Transverse colon (tissue), 4 donors: ENCODE measurements at regions of chr5 and their contacts with region 1.

Region 1: DNA sequence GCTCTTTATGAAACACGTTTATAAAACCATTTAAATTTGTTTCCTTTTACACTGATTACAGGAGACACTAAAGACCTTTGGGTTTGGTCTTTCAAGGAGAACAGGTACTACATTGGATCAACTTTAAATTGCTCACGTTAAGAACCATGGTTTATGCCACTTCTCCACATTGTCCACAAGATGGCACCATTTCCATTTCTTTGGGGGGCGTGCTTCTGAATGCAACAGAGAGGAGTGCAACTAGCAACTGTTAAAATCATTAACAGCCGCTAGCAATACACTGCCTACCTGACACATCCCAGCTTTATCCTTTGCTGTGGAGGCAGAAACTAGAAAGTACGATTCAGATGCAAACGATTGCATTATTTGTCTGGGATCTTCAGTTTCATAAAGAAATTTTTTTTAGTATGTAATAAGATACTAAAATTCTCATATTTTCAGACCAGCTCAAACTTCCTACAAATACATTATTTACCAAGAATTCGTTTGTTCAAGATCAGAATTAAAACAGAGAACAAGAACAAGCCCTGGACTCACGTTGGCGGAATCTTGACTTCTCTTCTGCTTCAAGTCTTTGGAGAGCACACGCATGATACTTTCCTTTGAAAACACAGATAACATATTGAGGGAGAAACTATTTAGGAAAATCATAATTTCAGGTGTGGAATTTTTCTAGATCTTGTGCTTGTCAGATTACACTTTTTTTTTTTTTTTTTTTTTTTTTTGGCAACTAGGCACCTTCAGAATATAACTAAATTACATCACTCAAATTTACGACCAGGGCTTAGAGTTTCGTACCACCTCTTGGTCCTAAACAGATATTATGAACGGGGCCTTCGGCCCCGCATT is 702 bp downstream of the CDC20B start:
- DNase-seq: peak; percentile 50
- H3K4me3 ChIP-seq: peak overlapping the region in 3 of 4 donors; percentile 35 to 56 (median 42)
- H3K27ac ChIP-seq: peak overlapping the region in 1 of 4 donors; percentile 43
- H3K4me1 ChIP-seq: peaks cover 9 to 32% (median 28%) of the 10 kb centered on the region in 4 donors
- H3K27me3 ChIP-seq: peaks cover 71% of the 10 kb centered on the region
- CTCF ChIP-seq: peak; percentile 77 to 87 (median 82)
- EP300 ChIP-seq: no peak
- POLR2A ChIP-seq: no peak

Region 2: GRCh38 chr5:54517174-54518092 is 654.8 kb before region 1 on chr5 and contains the start of gene SNX18:
- in situ Hi-C with region 1: loop called in 3 of 4 experiments (anchors 25 kb)
- intact Hi-C with region 1: no loop called
- DNase-seq: peak; percentile 93
- H3K4me3 ChIP-seq: peak within 1 kb of the TSS; percentile 82 to 92 (median 88)
- H3K27ac ChIP-seq: peak within 1 kb of the TSS; percentile 91 to 95 (median 95)
- H3K4me1 ChIP-seq: peaks cover 5 to 46% (median 21%) of the 10 kb centered on the region in 4 donors
- H3K27me3 ChIP-seq: no peaks in the 10 kb centered on the region
- CTCF ChIP-seq: peak; percentile 90 to 98 (median 94)
- EP300 ChIP-seq: no peak
- POLR2A ChIP-seq: peak; percentile 27
- total RNA-seq, gene SNX18: 18.0 to 35.4 (median 20.0) TPM

Region 3: DNA sequence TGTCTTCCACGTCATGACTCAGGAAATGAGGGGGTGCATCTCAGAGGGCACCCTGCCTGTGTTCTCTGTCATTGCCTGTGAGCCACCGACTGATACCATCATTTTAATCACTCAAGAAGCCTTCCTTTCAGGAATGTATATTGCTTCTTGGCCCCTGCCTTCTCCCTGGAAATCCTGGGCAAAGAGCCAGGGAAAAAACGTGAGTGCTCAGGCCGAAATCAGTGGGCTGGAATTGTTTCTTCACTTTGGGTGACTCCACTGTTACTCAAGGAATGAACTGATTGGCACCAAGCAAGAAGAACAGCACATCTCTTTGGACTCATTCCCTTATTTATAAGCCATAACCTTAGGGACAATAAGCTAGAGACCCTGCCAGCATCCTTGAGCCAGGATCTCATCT is 528.6 kb before region 1 on chr5:
- in situ Hi-C with region 1: no loop called
- intact Hi-C with region 1: no loop called
- DNase-seq: no peak
- H3K4me3 ChIP-seq: no peak overlapping the region
- H3K27ac ChIP-seq: no peak overlapping the region
- H3K4me1 ChIP-seq: peaks cover 0 to 11% (median 5%) of the 10 kb centered on the region in 4 donors
- H3K27me3 ChIP-seq: no peaks in the 10 kb centered on the region
- CTCF ChIP-seq: no peak
- EP300 ChIP-seq: no peak
- POLR2A ChIP-seq: no peak

Region 4: DNA sequence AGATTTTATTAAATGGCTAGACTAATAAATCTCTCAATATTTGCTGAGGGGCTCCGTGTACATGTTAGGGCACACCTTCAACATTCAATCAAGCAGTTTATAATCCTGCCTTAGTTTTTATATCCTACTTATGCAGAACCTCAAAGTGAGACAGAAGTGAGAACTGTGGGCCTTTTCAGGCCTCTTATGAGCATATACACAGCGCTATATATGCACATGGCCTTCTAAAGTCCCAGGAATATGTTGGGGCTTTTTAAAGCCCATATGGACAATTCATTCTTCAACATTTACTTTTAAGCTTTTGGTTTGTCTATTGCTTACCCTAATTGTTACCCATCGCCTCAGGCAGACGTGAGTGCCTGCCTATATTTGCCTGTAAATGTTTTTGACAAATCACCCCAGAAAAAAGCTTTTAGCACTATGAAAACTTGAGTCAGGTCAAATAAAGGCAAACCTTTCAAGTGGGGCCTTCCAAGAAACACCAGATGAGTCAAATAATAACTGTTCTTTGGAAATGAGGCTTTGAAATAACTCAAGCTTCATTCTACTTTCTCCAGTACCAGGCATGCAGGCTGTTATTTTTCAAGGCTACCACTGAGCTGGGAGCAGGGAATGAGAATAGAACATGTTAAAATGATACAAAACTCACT is 245.1 kb before region 1 on chr5:
- in situ Hi-C with region 1: no loop called
- intact Hi-C with region 1: no loop called
- DNase-seq: no peak
- H3K4me3 ChIP-seq: no peak overlapping the region
- H3K27ac ChIP-seq: no peak overlapping the region
- H3K4me1 ChIP-seq: no peaks in the 10 kb centered on the region
- H3K27me3 ChIP-seq: no peaks in the 10 kb centered on the region
- CTCF ChIP-seq: no peak
- EP300 ChIP-seq: no peak
- POLR2A ChIP-seq: no peak

Region 5: GRCh38 chr5:55072666-55073065 is 99.6 kb before region 1 on chr5:
- in situ Hi-C with region 1: no loop called
- intact Hi-C with region 1: no loop called
- DNase-seq: no peak
- H3K4me3 ChIP-seq: no peak overlapping the region
- H3K27ac ChIP-seq: no peak overlapping the region
- H3K4me1 ChIP-seq: no peaks in the 10 kb centered on the region
- H3K27me3 ChIP-seq: no peaks in the 10 kb centered on the region
- CTCF ChIP-seq: no peak
- EP300 ChIP-seq: no peak
- POLR2A ChIP-seq: no peak

Region 6: GRCh38 chr5:55226027-55226933 is 54.0 kb after region 1 on chr5:
- in situ Hi-C with region 1: loop called in 3 of 4 experiments (anchors 10 kb)
- intact Hi-C with region 1: loop called (anchors 10 kb)
- DNase-seq: peak; percentile 70
- H3K4me3 ChIP-seq: peak overlapping the region; percentile 12 to 50 (median 30)
- H3K27ac ChIP-seq: peak overlapping the region in 1 of 4 donors; percentile 48
- H3K4me1 ChIP-seq: peaks cover 9 to 29% (median 24%) of the 10 kb centered on the region in 4 donors
- H3K27me3 ChIP-seq: peaks cover 100% of the 10 kb centered on the region
- CTCF ChIP-seq: peak; percentile 24 to 47 (median 40)
- EP300 ChIP-seq: no peak
- POLR2A ChIP-seq: no peak

Region 7: DNA sequence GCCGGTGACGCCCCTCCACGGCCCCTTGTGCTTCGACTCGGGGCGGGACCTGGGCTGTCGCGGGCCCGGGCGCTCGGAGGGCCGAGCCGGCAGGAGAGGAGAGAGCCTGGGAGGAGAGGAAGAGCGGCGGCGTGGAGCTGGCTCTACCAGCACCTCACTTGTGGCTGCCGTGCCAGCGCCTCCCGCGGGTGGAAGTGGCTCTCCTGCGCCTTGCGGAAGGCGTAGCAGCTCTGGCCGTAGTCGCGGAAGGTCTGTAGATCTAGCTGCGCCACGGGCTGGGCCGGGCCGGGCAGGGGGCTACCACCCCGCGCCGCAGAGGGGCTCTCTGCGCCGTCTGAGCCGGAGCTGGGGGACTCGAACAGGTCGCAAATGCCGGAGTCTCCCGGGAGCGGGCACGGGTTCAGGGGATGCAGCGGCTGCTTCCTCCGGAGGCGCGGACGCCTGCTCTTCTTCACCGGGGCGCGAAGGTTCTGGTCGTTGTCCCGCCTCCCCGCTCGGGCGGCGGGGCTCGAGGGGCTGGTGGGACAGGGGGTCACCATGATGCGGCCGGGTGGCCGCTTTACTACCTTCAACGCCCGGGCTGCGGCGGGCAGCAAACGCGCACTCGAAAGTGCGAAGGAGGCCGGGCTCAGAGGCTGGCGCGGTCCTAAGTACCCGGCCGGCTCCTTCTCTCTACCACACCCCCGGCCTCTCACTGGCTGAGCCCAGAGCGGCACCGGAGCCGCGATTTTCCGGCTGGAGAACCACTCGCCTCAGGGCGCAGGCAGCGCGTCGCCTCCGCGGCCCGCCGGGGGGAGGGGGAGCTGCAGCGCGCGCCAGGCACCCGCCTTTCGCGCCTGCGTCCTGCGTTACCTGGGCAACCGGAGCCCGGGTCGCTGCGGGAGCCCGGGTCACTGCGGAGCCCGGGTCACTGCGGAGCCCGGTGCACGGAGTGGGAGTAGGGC is 61.0 kb after region 1 on chr5 and contains the start of gene CCNO:
- in situ Hi-C with region 1: loop called in 3 of 4 experiments (anchors 10 kb)
- intact Hi-C with region 1: loop called (anchors 10 kb)
- DNase-seq: peak; percentile 80
- H3K4me3 ChIP-seq: peak within 1 kb of the TSS; percentile 30 to 63 (median 36)
- H3K27ac ChIP-seq: peak within 1 kb of the TSS; percentile 19 to 75 (median 47)
- H3K4me1 ChIP-seq: peaks cover 16 to 42% (median 41%) of the 10 kb centered on the region in 4 donors
- H3K27me3 ChIP-seq: peaks cover 96% of the 10 kb centered on the region
- CTCF ChIP-seq: no peak
- EP300 ChIP-seq: no peak
- POLR2A ChIP-seq: no peak
- total RNA-seq, gene CCNO: 0.80 to 6.0 (median 2.8) TPM

Region 8: GRCh38 chr5:55691265-55692105 is 519.2 kb after region 1 on chr5:
- in situ Hi-C with region 1: no loop called
- intact Hi-C with region 1: loop called (anchors 10 kb)
- DNase-seq: no peak
- H3K4me3 ChIP-seq: no peak overlapping the region
- H3K27ac ChIP-seq: peak overlapping the region; percentile 7 to 56 (median 28)
- H3K4me1 ChIP-seq: peaks cover 9 to 34% (median 19%) of the 10 kb centered on the region in 4 donors
- H3K27me3 ChIP-seq: no peaks in the 10 kb centered on the region
- CTCF ChIP-seq: peak; percentile 67 to 85 (median 71)
- EP300 ChIP-seq: no peak
- POLR2A ChIP-seq: no peak

Region 9: DNA sequence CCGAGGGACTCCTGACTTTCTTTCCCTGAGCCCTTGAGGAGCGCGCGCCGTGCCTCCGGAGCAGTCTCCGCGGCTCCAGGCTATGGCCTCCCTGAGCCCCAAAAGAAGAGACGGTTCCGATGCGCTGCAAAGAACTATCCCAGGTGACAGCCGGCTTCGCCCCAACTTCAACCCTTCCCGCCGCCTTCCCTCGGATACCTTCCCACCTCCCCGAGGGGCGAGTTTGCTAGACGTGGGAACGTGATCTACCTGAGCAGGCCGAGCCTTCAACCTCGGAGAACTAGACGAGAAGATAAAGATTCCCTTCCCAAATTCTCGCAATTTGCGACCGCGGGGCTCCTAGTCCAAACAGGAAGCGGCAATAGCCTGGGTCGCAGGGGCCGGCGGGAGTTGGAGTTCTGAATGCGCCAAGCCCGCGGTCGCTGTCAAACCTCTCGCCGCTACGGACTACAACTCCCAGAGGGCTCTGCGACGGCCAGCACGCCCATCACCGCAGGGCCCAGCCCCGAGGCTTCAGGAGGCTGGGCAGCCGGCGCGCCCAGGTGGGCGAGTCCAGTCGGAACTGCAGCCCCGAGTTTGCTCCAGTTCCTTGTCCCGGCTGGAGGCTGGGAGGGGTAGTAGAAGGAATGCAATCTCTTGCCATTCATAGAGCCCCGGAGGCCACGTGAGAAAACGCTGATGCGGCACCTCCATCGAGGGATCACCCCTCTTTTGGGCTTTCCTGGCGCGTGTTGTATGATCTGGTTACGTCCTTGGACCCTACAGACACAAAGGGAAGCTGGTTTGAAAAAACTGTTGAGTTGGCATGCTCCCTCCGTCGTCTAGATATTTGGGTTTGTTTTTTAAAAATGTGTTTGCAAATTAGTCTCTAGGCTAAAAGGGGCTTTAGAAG is 539.9 kb after region 1 on chr5 and contains the start of gene SLC38A9:
- in situ Hi-C with region 1: loop called in 1 of 4 experiments (anchors 25 kb)
- intact Hi-C with region 1: no loop called
- DNase-seq: peak; percentile 97
- H3K4me3 ChIP-seq: peak within 1 kb of the TSS; percentile 72 to 88 (median 80)
- H3K27ac ChIP-seq: peak within 1 kb of the TSS; percentile 67 to 85 (median 79)
- H3K4me1 ChIP-seq: peaks cover 7 to 28% (median 13%) of the 10 kb centered on the region in 4 donors
- H3K27me3 ChIP-seq: no peaks in the 10 kb centered on the region
- CTCF ChIP-seq: no peak
- EP300 ChIP-seq: no peak
- POLR2A ChIP-seq: peak; percentile 72
- total RNA-seq, gene SLC38A9: 15.0 to 48.6 (median 32.3) TPM